HAP-1 (cell line): ENCODE measurements at regions of chr6 and their contacts with region 1.

Region 1: DNA sequence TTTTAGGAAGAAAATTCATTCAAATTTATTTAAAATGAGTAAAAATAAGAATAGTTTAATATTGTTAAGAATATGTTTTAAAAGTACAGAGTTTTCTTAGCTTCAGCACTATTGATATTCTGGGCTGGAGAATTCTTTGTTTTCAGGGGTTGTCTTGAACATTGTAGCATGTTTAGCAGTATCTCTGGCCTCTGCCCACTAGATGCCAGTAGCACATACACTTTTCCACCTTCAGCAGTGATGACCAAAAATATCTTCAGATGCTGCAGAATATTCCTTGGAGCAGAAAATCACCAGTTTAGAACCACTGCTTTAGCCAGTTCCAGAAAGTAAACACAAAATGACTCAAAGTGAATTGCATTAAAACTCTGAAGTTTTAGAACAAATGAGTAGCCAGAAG is 19.4 kb upstream of the SDHAF4 start:
- DNase-seq: peak; percentile 45 to 64
- H3K4me3 ChIP-seq: no peak overlapping the region
- H3K4me1 ChIP-seq: peaks cover 14% of the 10 kb centered on the region
- H3K27me3 ChIP-seq: no peaks in the 10 kb centered on the region

Region 2: DNA sequence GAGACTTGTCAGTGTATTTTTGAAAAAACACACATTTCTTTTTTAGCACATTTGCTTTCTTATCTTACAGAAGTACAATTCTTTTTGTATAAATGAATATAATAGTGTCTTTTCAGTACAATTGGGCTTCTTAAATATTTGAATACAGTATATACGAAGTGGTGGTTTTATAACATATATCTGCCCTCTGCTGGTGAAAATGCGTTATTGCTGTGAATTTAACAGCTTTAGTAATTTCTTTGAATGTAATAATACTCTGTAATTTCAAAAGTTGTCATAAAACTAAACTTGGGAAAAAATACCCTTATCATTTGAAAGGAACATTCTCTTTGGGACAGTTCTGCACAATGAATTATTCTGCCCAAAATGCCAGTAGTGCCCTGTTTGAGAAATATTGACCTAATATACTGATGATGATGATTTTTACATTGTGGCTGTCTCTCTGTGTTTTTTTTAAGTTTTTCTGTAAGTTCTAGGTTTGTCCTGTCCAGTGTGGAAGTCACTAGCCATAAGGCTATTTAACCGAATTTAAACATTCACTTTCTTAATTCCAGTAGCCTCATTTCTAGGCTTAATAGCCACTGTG is 139.3 kb after region 1 on chr6:
- in situ Hi-C with region 1: loop called (anchors 10 kb)
- DNase-seq: peak; percentile 24 to 61
- H3K4me3 ChIP-seq: no peak overlapping the region
- H3K4me1 ChIP-seq: peaks cover 7% of the 10 kb centered on the region
- H3K27me3 ChIP-seq: no peaks in the 10 kb centered on the region

Region 3: DNA sequence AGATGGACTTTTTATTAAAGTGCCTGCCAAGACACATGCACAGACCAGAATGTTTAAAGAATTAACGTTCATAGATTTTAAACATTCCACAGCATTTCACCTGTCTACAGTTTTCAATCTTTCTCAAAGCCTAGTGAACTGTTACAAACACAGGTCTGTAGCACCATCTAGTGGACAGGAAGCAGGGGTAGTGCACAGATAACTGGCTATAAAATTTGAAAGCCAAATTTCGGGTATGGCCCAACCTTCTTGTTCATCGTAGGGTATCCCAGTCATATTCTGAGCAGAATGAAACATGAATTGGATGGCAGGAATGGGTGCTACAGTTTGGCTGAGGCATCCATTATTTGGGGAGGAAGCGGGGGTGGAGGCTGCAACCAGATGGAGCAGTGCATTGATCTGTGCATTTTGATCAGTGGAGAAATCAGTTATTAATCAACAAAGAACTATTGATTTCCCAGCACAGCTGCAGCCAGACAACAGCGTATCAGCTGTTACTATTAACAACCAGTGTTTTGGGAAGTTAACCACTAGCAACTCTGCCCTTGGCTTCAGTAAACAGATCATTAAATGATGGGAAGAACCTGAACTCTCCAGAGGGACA is 465.7 kb after region 1 on chr6:
- in situ Hi-C with region 1: loop called (anchors 25 kb)
- DNase-seq: peak; percentile 49 to 76
- H3K4me3 ChIP-seq: no peak overlapping the region
- H3K4me1 ChIP-seq: peaks cover 7% of the 10 kb centered on the region
- H3K27me3 ChIP-seq: no peaks in the 10 kb centered on the region